A549 (cell line): ENCODE measurements at regions of chr1 and their contacts with region 1.

Region 1: GRCh38 chr1:46616277-46617107 is at the start of gene MOB3C:
- DNase-seq: peak; percentile 36 to 47
- ATAC-seq: peak; percentile 73 to 87
- H3K4me3 ChIP-seq: peak within 1 kb of the TSS; percentile 81
- H3K27ac ChIP-seq: peak within 1 kb of the TSS; percentile 79 to 94
- H3K4me1 ChIP-seq: peaks cover 34% of the 10 kb centered on the region
- CTCF ChIP-seq: no peak
- EP300 ChIP-seq: no peak
- POLR2A ChIP-seq: peak; percentile 59
- RAD21 ChIP-seq: no peak
- polyA plus RNA-seq, gene MOB3C: 2.6 and 3.8 TPM in 2 replicates

Region 2: DNA sequence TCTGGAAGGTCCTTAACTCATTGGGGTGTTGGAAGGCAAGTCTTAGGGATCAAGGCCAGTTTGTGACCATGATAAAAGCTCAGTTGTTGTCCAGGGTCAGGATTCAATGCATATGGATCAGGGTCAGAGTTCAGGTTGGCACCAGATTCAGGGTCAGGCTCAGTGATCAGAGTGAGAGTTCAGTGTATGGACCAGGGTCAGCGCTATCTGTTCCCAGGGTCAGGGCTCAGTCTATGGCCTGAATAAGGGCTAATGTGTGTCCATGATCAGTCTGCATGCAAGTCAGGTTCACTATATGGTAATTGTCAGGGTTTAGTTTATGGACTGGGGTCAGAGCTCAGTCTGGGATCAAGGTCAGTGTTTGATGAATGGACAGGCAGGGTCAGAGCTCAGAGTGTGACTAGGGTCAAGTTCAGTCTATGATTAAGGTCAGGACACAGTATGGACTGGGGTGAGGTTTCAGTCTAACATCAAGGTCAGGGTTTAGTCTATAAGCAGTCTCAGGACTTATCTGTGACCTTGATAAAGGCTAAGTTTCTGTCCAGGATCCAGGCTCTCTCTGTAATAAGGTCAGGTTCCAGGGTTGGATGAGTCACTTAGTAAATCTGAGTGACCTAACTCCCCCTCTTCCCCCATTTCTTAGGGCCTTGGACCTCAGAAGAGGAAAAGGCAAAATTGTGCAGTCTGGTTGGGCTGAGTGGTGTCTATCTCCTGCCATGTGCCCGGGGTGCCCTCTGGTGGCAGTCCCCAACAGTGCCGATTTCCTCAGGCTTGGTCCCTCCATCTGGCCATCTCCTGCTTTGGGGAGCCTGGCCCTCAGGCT is 88.8 kb before region 1 on chr1:
- CTCF ChIA-PET with region 1: no interaction called
- POLR2A ChIA-PET with region 1: no interaction called
- DNase-seq: peak; percentile 64 to 69
- ATAC-seq: peak; percentile 78 to 91
- H3K4me3 ChIP-seq: no peak overlapping the region
- H3K27ac ChIP-seq: peak overlapping the region in 1 of 2 experiments; percentile 68; a peak in 3 of 6 replicates
- H3K4me1 ChIP-seq: peaks cover 32% of the 10 kb centered on the region
- CTCF ChIP-seq: peak; percentile 85
- EP300 ChIP-seq: no peak
- POLR2A ChIP-seq: no peak
- RAD21 ChIP-seq: peak; percentile 97 to 98

Region 3: GRCh38 chr1:46569884-46570725 is 46.4 kb before region 1 on chr1:
- CTCF ChIA-PET with region 1: no interaction called
- POLR2A ChIA-PET with region 1: no interaction called
- DNase-seq: no peak
- ATAC-seq: no peak
- H3K4me3 ChIP-seq: no peak overlapping the region
- H3K27ac ChIP-seq: no peak overlapping the region
- H3K4me1 ChIP-seq: no peaks in the 10 kb centered on the region
- CTCF ChIP-seq: no peak
- EP300 ChIP-seq: no peak
- POLR2A ChIP-seq: no peak
- RAD21 ChIP-seq: no peak

Region 4: GRCh38 chr1:46603858-46604549 is 12.5 kb before region 1 on chr1 and contains the start of gene MKNK1:
- CTCF ChIA-PET with region 1: interaction called, 7 read pairs
- POLR2A ChIA-PET with region 1: interaction called, 12 read pairs
- DNase-seq: peak; percentile 90 to 97
- ATAC-seq: peak; percentile 88 to 95
- H3K4me3 ChIP-seq: peak within 1 kb of the TSS; percentile 90
- H3K27ac ChIP-seq: peak within 1 kb of the TSS; percentile 83 to 93
- H3K4me1 ChIP-seq: peaks cover 13% of the 10 kb centered on the region; the same call in 2 of the 3 replicates
- CTCF ChIP-seq: no peak
- EP300 ChIP-seq: no peak
- POLR2A ChIP-seq: peak; percentile 90
- RAD21 ChIP-seq: no peak
- polyA plus RNA-seq, gene MKNK1: 24.2 and 28.4 TPM in 2 replicates